IMR-90 (cell line): ENCODE measurements at regions of chr6 and their contacts with region 1.

Region 1: DNA sequence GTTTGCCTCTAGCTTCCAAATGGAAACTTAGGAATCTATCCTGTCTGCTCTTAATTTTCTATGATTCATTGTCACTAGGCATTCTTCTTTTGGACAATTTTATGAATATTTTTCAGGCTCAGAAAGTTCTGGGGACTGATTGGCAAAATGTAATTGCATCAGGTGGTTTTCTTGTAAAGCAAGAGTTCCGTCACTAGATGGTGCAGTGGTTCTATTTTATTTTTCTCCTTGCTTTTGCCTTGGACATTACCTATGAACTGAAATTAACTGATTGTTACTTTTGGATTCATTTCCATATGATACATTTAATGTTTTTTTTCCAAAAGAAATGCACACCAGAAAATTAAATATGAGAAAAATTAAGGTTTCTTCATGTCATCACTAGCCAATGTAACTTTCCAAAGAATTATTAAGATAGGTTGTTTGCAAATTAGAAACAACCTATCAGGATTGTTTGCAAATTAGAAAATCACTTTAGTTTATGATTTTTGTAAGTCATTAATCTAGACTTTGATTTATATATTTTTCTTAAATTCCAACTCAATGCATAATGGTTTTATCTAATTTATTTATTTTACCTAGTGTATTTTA is 48.0 kb downstream of the TMEM170B start:
- DNase-seq: peak; percentile 79
- ATAC-seq: peak; percentile 44
- H3K4me3 ChIP-seq: no peak overlapping the region
- H3K27ac ChIP-seq: peak overlapping the region; percentile 62; the same call in 1 of the 2 replicates
- H3K4me1 ChIP-seq: peaks cover 13% of the 10 kb centered on the region
- H3K27me3 ChIP-seq: no peaks in the 10 kb centered on the region
- CTCF ChIP-seq: peak; percentile 82
- POLR2A ChIP-seq: no peak
- RAD21 ChIP-seq: peak; percentile 85

Region 2: DNA sequence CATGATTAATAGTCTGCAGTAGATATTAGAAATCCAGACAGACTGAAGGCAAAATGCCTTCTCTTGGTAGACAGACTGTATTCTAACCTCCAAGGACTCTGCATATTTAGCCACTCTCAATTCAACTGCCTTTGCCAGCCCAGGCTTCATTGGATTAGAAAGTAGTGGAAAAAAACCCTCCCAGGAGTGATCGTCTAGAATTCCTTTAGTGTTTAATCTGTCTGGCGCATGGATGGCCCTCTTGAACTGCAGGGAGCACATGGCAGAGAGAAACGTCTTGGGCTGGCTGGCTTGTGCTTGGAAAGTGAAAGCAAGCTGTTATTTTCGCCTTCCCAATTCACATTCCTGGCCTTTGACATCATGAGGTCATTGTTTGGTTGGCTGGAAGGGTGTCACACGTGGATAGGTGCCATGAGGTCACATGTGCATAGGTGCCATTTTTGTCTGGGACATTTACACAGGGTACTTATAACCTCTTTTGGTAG is 322.2 kb before region 1 on chr6:
- CTCF ChIA-PET with region 1: no interaction called
- POLR2A ChIA-PET with region 1: no interaction called
- dilution Hi-C with region 1: no loop called
- in situ Hi-C with region 1: no loop called
- intact Hi-C with region 1: no loop called
- DNase-seq: peak; percentile 84
- ATAC-seq: peak; percentile 94
- H3K4me3 ChIP-seq: no peak overlapping the region
- H3K27ac ChIP-seq: peak overlapping the region; percentile 0; the same call in 1 of the 2 replicates
- H3K4me1 ChIP-seq: peaks cover 5% of the 10 kb centered on the region; the same call in 1 of the 2 replicates
- H3K27me3 ChIP-seq: no peaks in the 10 kb centered on the region
- CTCF ChIP-seq: no peak
- POLR2A ChIP-seq: no peak
- RAD21 ChIP-seq: no peak

Region 3: DNA sequence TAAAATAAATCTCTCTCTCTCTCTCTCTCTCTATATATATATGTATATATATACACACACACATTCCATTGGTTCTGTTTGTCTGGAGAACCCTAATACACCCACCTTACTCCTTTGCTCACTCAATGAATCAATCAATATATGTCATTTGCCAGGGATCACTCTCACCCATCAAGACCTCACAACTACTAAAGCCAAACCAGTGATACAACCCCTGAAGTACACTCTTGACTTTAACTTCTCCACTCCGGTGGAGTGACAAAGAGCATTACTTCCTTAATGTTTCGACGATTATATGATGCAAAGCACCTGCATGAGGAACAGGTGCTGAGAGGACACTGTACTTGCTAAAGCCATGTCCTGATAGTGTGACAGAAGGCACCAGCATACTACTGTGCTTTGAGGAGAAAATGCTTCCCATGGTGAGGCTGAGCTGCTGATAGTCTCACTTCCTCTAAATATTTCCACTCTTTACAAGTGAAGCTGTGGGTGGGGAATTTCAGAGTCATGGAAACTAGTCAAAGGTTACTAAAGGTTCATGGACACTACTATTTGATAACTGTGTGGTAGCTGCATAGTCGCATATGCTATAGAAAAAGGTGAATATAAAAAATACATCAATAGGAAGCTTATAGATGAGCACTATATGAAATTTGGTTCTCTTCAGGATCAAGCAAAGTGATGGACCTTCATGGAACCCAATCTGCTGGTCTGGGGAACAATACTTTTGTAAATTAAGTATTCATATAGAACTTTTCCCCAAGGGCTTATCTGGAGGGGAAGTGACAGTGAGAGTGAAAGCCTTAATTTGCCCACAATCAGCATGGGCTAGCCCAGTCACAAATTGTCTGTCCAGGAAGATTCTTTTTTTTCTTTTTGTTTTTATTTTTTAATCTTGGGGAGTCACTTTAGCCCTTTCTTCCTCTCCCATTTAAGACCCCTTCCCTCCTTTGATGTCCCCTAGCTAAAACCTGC is 211.2 kb before region 1 on chr6:
- CTCF ChIA-PET with region 1: no interaction called
- POLR2A ChIA-PET with region 1: no interaction called
- dilution Hi-C with region 1: no loop called
- in situ Hi-C with region 1: no loop called
- intact Hi-C with region 1: no loop called
- DNase-seq: no peak
- ATAC-seq: no peak
- H3K4me3 ChIP-seq: no peak overlapping the region
- H3K27ac ChIP-seq: no peak overlapping the region
- H3K4me1 ChIP-seq: no peaks in the 10 kb centered on the region; the same call in 1 of the 2 replicates
- H3K27me3 ChIP-seq: no peaks in the 10 kb centered on the region
- CTCF ChIP-seq: no peak
- POLR2A ChIP-seq: no peak
- RAD21 ChIP-seq: no peak

Region 4: GRCh38 chr6:11609315-11610071 is 24.0 kb after region 1 on chr6:
- CTCF ChIA-PET with region 1: interaction called, 3 read pairs
- POLR2A ChIA-PET with region 1: no interaction called
- dilution Hi-C with region 1: no loop called
- in situ Hi-C with region 1: no loop called
- intact Hi-C with region 1: loop called (anchors 1 kb)
- DNase-seq: peak; percentile 85
- ATAC-seq: peak; percentile 78
- H3K4me3 ChIP-seq: no peak overlapping the region
- H3K27ac ChIP-seq: peak overlapping the region; percentile 95
- H3K4me1 ChIP-seq: peaks cover 25% of the 10 kb centered on the region
- H3K27me3 ChIP-seq: no peaks in the 10 kb centered on the region
- CTCF ChIP-seq: no peak
- POLR2A ChIP-seq: no peak
- RAD21 ChIP-seq: no peak

Region 5: DNA sequence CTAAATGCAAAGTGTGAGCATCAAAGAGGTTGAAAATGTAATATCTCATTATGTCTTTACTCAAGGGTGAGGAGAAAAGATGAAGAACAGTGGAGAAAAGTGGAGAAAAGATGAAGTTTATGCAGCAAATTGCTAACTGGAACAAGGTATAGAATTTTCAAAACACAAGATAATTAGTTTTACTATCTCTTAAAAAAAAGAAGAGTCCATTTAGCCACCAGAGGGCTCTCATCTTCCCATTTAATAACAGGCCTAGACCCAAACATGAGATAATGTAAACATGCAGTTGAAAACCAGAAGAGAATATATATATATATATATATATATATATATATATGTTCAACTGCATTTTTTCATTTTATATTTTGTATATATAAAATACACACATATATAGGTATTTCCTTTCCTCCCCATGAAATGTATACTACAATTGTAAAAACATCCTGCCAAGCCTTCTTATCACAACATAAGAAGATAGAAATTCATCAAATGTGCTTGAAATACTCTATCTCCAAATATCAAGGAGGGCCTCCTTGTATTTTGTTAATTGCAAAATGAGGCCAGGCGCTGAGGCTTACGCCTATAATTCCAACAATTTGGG is 114.7 kb after region 1 on chr6:
- CTCF ChIA-PET with region 1: no interaction called
- POLR2A ChIA-PET with region 1: no interaction called
- dilution Hi-C with region 1: no loop called
- in situ Hi-C with region 1: no loop called
- intact Hi-C with region 1: loop called (anchors 5 kb)
- DNase-seq: peak; percentile 73
- ATAC-seq: peak; percentile 29; the same call in 1 of the 2 replicates
- H3K4me3 ChIP-seq: no peak overlapping the region
- H3K27ac ChIP-seq: no peak overlapping the region
- H3K4me1 ChIP-seq: peaks cover 6% of the 10 kb centered on the region; the same call in 1 of the 2 replicates
- H3K27me3 ChIP-seq: no peaks in the 10 kb centered on the region
- CTCF ChIP-seq: peak; percentile 64
- POLR2A ChIP-seq: no peak
- RAD21 ChIP-seq: peak; percentile 69

Region 6: GRCh38 chr6:11921017-11921438 is 335.5 kb after region 1 on chr6:
- CTCF ChIA-PET with region 1: no interaction called
- POLR2A ChIA-PET with region 1: no interaction called
- dilution Hi-C with region 1: no loop called
- in situ Hi-C with region 1: no loop called
- intact Hi-C with region 1: loop called (anchors 5 kb)
- DNase-seq: peak; percentile 95
- ATAC-seq: peak; percentile 96
- H3K4me3 ChIP-seq: no peak overlapping the region
- H3K27ac ChIP-seq: peak overlapping the region; percentile 59
- H3K4me1 ChIP-seq: peaks cover 18% of the 10 kb centered on the region
- H3K27me3 ChIP-seq: no peaks in the 10 kb centered on the region
- CTCF ChIP-seq: no peak
- POLR2A ChIP-seq: peak; percentile 76; the same call in 1 of the 2 replicates
- RAD21 ChIP-seq: peak; percentile 46

Region 7: GRCh38 chr6:12075067-12075563 is 489.6 kb after region 1 on chr6:
- CTCF ChIA-PET with region 1: no interaction called
- POLR2A ChIA-PET with region 1: no interaction called
- dilution Hi-C with region 1: no loop called
- in situ Hi-C with region 1: no loop called
- intact Hi-C with region 1: loop called (anchors 5 kb)
- DNase-seq: no peak
- ATAC-seq: peak; percentile 54
- H3K4me3 ChIP-seq: no peak overlapping the region
- H3K27ac ChIP-seq: no peak overlapping the region
- H3K4me1 ChIP-seq: no peaks in the 10 kb centered on the region
- H3K27me3 ChIP-seq: no peaks in the 10 kb centered on the region
- CTCF ChIP-seq: peak; percentile 53
- POLR2A ChIP-seq: no peak
- RAD21 ChIP-seq: peak; percentile 60

Region 8: GRCh38 chr6:12233693-12234571 is 648.4 kb after region 1 on chr6:
- CTCF ChIA-PET with region 1: interaction called, 6 read pairs
- POLR2A ChIA-PET with region 1: no interaction called
- dilution Hi-C with region 1: no loop called
- in situ Hi-C with region 1: loop called (anchors 5 kb)
- intact Hi-C with region 1: loop called (anchors 1 kb)
- DNase-seq: peak; percentile 84
- ATAC-seq: peak; percentile 90
- H3K4me3 ChIP-seq: no peak overlapping the region
- H3K27ac ChIP-seq: no peak overlapping the region
- H3K4me1 ChIP-seq: peaks cover 4% of the 10 kb centered on the region
- H3K27me3 ChIP-seq: no peaks in the 10 kb centered on the region
- CTCF ChIP-seq: peak; percentile 98
- POLR2A ChIP-seq: no peak
- RAD21 ChIP-seq: peak; percentile 88

Region 9: GRCh38 chr6:12605888-12606345 is 1020.4 kb after region 1 on chr6:
- CTCF ChIA-PET with region 1: interaction called, 3 read pairs
- POLR2A ChIA-PET with region 1: no interaction called
- dilution Hi-C with region 1: no loop called
- in situ Hi-C with region 1: loop called (anchors 5 kb)
- intact Hi-C with region 1: loop called (anchors 1 kb)
- DNase-seq: peak; percentile 75
- ATAC-seq: peak; percentile 77
- H3K4me3 ChIP-seq: no peak overlapping the region
- H3K27ac ChIP-seq: no peak overlapping the region
- H3K4me1 ChIP-seq: peaks cover 9% of the 10 kb centered on the region
- H3K27me3 ChIP-seq: no peaks in the 10 kb centered on the region
- CTCF ChIP-seq: peak; percentile 81
- POLR2A ChIP-seq: no peak
- RAD21 ChIP-seq: peak; percentile 88